Left colon (tissue), 2 donors: ENCODE measurements at regions of chr10 and their contacts with region 1.

Region 1: DNA sequence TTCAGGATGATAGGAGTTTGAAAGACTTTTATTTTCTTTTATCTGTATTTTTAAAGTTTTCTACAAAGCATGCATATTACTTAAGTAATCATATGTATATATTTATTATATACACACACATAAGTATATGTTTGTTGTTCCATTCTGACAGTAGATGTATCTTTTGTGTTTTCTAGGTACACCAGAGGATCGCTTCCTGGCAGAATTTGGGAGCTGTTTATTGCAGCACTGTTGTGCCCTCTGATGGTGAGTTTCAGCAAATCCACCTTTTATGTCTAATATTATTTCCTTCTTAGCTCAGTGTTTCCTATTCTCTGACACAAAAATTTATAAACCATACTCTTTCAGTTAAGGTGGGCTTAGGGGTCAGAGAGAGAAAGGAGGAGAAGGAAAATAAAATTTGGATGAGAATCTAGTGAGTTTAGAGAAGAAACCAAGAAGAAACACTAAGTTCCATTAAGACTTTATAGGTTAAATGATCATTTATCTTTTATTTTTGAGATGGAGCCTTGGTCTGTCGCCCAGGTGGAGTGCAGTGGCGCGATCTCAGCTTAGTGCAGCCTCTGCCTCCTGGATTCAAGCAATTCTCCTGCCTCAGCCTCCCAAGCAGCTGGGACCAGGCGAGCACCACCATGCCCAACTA is 59.2 kb upstream of the OIT3 start:
- DNase-seq: peak in 1 of 2 donors; percentile 12
- ATAC-seq: peak; percentile 30

Region 2: DNA sequence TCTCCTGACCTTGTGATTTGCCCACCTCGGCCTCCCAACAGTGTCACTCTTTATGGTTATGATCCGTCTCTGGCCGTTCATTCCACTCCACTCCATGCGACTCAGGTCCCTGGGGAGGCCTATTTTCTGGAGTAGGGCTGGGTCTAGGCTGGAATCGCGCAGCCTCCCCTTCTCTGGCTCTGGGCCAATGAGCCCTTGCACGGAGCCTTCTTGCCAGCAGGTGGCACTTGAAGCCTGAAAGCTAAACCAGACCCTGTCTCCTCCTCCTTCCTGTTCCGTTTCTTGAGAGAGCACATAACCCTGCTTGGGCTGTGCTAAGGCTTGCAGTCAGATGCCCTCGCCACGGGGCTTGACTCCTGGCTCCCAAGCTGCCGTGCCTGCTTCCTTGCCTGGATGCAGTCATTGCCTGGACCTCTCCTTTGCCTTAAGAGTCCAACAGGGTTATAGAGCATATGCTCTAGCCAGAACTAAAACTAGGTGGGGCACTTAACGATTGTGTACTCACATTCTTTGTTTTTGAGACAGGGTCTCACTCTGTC is 470.0 kb before region 1 on chr10:
- intact Hi-C with region 1: loop called in 1 of 2 experiments (anchors 10 kb)
- DNase-seq: peak; percentile 72 to 88
- ATAC-seq: peak; percentile 93

Region 3: GRCh38 chr10:72692057-72692910 is 142.0 kb before region 1 on chr10 and contains the start of gene MCU:
- intact Hi-C with region 1: loop called in 1 of 2 experiments (anchors 5 kb)
- DNase-seq: peak; percentile 78 to 96
- ATAC-seq: peak; percentile 84
- total RNA-seq, gene MCU: 84.6 to 106 TPM

Region 4: GRCh38 chr10:72702868-72703581 is 131.3 kb before region 1 on chr10:
- intact Hi-C with region 1: loop called in 1 of 2 experiments (anchors 5 kb)
- DNase-seq: no peak
- ATAC-seq: peak; percentile 82

Region 5: DNA sequence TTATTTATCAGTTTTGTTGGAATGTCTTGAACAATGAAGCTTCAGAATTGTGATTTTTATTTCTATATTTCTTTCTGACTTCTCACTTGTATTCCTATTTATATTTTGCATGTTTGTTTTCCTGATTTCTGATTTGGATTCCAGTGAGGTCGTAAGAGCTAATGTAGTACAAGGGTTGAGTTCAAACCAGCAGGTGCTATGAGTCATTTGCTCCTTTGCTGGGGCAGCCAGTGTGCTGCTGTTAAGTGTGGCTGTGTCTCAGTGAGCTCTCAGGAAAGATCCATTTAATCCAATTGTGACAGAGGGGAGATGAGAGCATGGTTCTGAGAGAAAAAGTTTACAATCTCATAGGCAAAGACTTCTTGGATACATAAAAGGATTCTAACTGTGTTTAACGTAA is 93.8 kb before region 1 on chr10:
- intact Hi-C with region 1: no loop called
- DNase-seq: no peak
- ATAC-seq: peak; percentile 81